ENCODE measurements at regions of chrX and their contacts with region 1.

Region 1: DNA sequence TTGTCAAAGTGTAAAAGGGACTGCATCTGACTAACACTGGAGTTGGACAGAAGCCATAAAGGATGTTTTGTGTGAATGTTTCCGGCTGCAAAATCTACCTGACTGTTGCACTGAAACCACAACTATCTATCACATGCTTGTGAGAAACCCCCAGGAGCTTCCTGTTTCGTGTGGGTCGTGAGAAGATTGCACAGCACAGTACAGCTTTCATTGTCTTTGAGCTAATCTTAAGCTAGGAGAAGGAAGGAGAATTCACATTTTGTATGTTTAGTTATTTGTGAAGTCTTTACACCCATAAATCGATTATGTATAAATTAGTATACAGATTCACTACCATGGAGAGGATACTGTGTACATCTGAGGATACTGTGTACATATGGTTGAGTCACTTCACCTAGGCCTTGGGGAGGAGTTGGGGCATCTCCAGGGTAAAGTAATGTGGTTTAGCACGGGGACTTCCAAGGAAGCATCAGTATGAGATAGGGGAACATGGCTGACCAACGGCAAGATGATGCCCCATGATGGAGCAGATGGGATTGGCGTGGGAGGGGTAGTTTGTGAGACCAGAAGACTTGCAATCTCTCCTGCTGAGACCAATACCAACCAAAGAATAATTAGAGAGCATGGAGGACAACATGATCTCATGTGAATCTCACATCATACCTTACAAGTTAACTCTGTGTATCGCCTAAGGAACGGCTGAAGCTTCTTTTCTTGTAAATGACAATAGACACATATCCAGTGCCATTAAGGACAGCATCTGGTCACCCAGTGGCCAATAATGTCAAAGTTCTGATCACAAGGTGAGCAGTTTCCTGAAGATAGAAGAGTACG is 43.1 kb upstream of the FAM9C start:
- DNase-seq: peak in 8 of 9 donors; percentile 54 to 94 (median 88)
- ATAC-seq: peak; percentile 77
- H3K4me3 ChIP-seq: peak overlapping the region; percentile 70
- H3K4me3 Mint-ChIP-seq: peak overlapping the region; percentile 72 to 89 (median 82)
- H3K27ac ChIP-seq: peak overlapping the region; percentile 88
- H3K27ac Mint-ChIP-seq: peak overlapping the region; percentile 94 to 99 (median 98)
- H3K4me1 ChIP-seq: peaks cover 79 to 81% of the 10 kb centered on the region in 2 donors
- H3K4me1 Mint-ChIP-seq: peaks cover 15 to 99% (median 86%) of the 10 kb centered on the region in 7 donors
- H3K27me3 ChIP-seq: no peaks in the 10 kb centered on the region
- H3K27me3 Mint-ChIP-seq: no peaks in the 10 kb centered on the region

Region 2: GRCh38 chrX:11758400-11759171 is 1329.0 kb before region 1 on chrX:
- CTCF ChIA-PET with region 1: no interaction called
- POLR2A ChIA-PET with region 1: no interaction called
- intact Hi-C with region 1: loop called in 1 of 2 experiments (anchors 5 kb)
- DNase-seq: peak; percentile 86 to 91 (median 89)
- ATAC-seq: peak; percentile 86
- H3K4me3 ChIP-seq: peak overlapping the region; percentile 95
- H3K4me3 Mint-ChIP-seq: peak overlapping the region; percentile 88 to 100 (median 97)
- H3K27ac ChIP-seq: peak overlapping the region; percentile 93
- H3K27ac Mint-ChIP-seq: peak overlapping the region; percentile 95 to 100 (median 99)
- H3K4me1 ChIP-seq: peaks cover 6 to 11% of the 10 kb centered on the region in 2 donors
- H3K4me1 Mint-ChIP-seq: peaks cover 1 to 48% (median 30%) of the 10 kb centered on the region in 7 donors
- H3K27me3 ChIP-seq: no peaks in the 10 kb centered on the region
- H3K27me3 Mint-ChIP-seq: peaks cover 0 to 24% (median 0%) of the 10 kb centered on the region in 5 donors

Region 3: GRCh38 chrX:11967986-11968859 is 1119.3 kb before region 1 on chrX:
- CTCF ChIA-PET with region 1: no interaction called
- POLR2A ChIA-PET with region 1: no interaction called
- intact Hi-C with region 1: no loop called
- DNase-seq: no peak
- ATAC-seq: no peak
- H3K4me3 ChIP-seq: no peak overlapping the region
- H3K4me3 Mint-ChIP-seq: no peak overlapping the region
- H3K27ac ChIP-seq: no peak overlapping the region
- H3K27ac Mint-ChIP-seq: no peak overlapping the region
- H3K4me1 ChIP-seq: no peaks in the 10 kb centered on the region
- H3K4me1 Mint-ChIP-seq: no peaks in the 10 kb centered on the region
- H3K27me3 ChIP-seq: no peaks in the 10 kb centered on the region
- H3K27me3 Mint-ChIP-seq: peaks cover 0 to 4% (median 0%) of the 10 kb centered on the region in 5 donors

Region 4: DNA sequence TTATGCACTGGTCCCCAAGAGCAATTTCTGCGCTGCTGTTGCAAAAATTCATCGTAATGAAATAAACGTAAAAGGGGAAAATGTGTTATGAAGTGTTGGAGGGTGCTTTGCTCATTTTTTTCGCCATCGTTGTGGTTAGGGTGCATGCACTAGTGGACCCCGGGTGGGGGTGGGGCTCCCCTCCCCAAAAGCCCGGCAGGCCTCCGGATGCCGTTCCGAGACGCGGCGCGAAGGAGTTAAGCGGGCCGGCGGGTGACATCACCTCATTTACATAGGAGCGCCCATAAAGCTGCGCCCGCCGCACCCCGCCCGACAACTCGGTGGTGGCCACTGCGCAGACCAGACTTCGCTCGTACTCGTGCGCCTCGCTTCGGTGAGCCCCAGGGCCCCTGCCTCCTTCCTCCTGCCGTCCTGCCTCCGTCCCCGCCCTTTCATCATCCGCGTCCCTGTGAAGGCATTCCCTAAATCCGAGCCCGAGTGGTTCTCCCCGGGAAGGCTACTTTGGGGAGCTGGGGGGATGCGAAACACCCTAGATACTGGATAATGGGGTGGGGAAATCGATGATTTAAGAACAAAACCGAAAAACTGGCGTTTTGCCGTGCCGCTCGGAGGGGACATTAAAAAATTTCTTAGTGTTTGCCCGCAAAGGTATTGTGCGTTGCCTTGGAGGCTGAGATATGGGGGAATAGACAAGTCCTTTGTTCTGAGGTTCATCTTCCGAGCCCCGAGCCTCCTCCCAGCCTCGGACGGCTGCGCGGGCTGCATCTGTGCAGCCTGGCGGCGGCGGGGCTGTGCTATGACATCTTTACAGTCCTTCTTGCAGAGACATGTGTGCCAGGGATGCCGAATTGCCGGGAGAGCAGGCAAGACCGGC is 112.5 kb before region 1 on chrX and contains the start of gene TMSB4X:
- CTCF ChIA-PET with region 1: interaction called, 36 read pairs
- POLR2A ChIA-PET with region 1: interaction called, 1,322 read pairs
- intact Hi-C with region 1: loop called (anchors 1 kb)
- DNase-seq: peak; percentile 69 to 87 (median 81)
- ATAC-seq: peak; percentile 75
- H3K4me3 ChIP-seq: peak within 1 kb of the TSS; percentile 97
- H3K4me3 Mint-ChIP-seq: peak within 1 kb of the TSS; percentile 92 to 99 (median 96)
- H3K27ac ChIP-seq: peak within 1 kb of the TSS; percentile 93
- H3K27ac Mint-ChIP-seq: peak within 1 kb of the TSS; percentile 92 to 99 (median 97)
- H3K4me1 ChIP-seq: peaks cover 5 to 19% of the 10 kb centered on the region in 2 donors
- H3K4me1 Mint-ChIP-seq: peaks cover 6 to 57% (median 24%) of the 10 kb centered on the region in 7 donors
- H3K27me3 ChIP-seq: no peaks in the 10 kb centered on the region
- H3K27me3 Mint-ChIP-seq: peaks cover 0 to 8% (median 0%) of the 10 kb centered on the region in 5 donors
- total RNA-seq, gene TMSB4X: 3,911 to 13,454 (median 4,935) TPM

Region 5: GRCh38 chrX:13029341-13029740 is 58.2 kb before region 1 on chrX:
- CTCF ChIA-PET with region 1: interaction called, 10 read pairs
- POLR2A ChIA-PET with region 1: interaction called, 269 read pairs
- intact Hi-C with region 1: loop called in 1 of 2 experiments (anchors 1 kb)
- DNase-seq: peak in 2 of 9 donors; percentile 13 to 23
- ATAC-seq: peak; percentile 44
- H3K4me3 ChIP-seq: no peak overlapping the region
- H3K4me3 Mint-ChIP-seq: peak overlapping the region; percentile 20 to 78 (median 62)
- H3K27ac ChIP-seq: peak overlapping the region; percentile 71
- H3K27ac Mint-ChIP-seq: peak overlapping the region; percentile 81 to 98 (median 93)
- H3K4me1 ChIP-seq: peaks cover 51 to 52% of the 10 kb centered on the region in 2 donors
- H3K4me1 Mint-ChIP-seq: peaks cover 33 to 88% (median 72%) of the 10 kb centered on the region in 7 donors
- H3K27me3 ChIP-seq: no peaks in the 10 kb centered on the region
- H3K27me3 Mint-ChIP-seq: no peaks in the 10 kb centered on the region

Region 6: DNA sequence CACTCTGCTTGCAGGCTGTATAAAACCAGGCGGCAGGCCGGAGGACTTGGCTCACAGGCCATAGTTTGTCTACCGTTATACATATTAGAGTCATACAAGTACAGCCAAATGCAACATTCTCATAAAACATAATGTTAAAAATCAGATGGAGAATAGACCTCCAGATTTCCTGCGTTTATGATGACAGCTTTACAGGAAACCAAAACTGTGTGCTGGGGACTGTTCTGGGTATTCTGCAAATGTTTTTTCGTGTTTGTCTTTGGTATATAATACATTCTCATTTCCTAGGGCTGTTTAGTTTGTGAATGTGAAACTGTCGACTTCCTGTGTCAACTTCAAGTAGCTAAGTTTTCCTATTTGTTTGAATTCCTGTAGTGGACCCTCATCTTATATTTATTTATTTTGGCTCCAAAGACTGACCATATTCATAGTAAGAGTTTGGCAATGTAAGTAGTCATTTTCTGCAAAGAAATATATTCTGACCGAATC is 36.4 kb after region 1 on chrX:
- CTCF ChIA-PET with region 1: no interaction called
- POLR2A ChIA-PET with region 1: interaction called, 4 read pairs
- intact Hi-C with region 1: loop called in 1 of 2 experiments (anchors 2 kb)
- DNase-seq: peak in 4 of 9 donors; percentile 14 to 33 (median 24)
- ATAC-seq: peak; percentile 29
- H3K4me3 ChIP-seq: peak overlapping the region; percentile 29
- H3K4me3 Mint-ChIP-seq: peak overlapping the region; percentile 18 to 76 (median 66)
- H3K27ac ChIP-seq: peak overlapping the region; percentile 52
- H3K27ac Mint-ChIP-seq: peak overlapping the region; percentile 84 to 95 (median 91)
- H3K4me1 ChIP-seq: peaks cover 19 to 25% of the 10 kb centered on the region in 2 donors
- H3K4me1 Mint-ChIP-seq: peaks cover 5 to 65% (median 48%) of the 10 kb centered on the region in 7 donors
- H3K27me3 ChIP-seq: no peaks in the 10 kb centered on the region
- H3K27me3 Mint-ChIP-seq: no peaks in the 10 kb centered on the region

Region 7: GRCh38 chrX:13177921-13178566 is 90.5 kb after region 1 on chrX:
- CTCF ChIA-PET with region 1: no interaction called
- POLR2A ChIA-PET with region 1: no interaction called
- intact Hi-C with region 1: no loop called
- DNase-seq: peak in 4 of 9 donors; percentile 10 to 44 (median 33)
- ATAC-seq: peak; percentile 36
- H3K4me3 ChIP-seq: no peak overlapping the region
- H3K4me3 Mint-ChIP-seq: peak overlapping the region in 1 of 10 donors; percentile 19
- H3K27ac ChIP-seq: no peak overlapping the region
- H3K27ac Mint-ChIP-seq: peak overlapping the region in 3 of 9 donors; percentile 35 to 63 (median 44)
- H3K4me1 ChIP-seq: peaks cover 0 to 10% of the 10 kb centered on the region in 2 donors
- H3K4me1 Mint-ChIP-seq: peaks cover 0 to 11% (median 10%) of the 10 kb centered on the region in 7 donors
- H3K27me3 ChIP-seq: no peaks in the 10 kb centered on the region
- H3K27me3 Mint-ChIP-seq: no peaks in the 10 kb centered on the region

Region 8: GRCh38 chrX:13360146-13360545 is 272.6 kb after region 1 on chrX:
- CTCF ChIA-PET with region 1: interaction called, 4 read pairs
- POLR2A ChIA-PET with region 1: no interaction called
- intact Hi-C with region 1: loop called in 1 of 2 experiments (anchors 5 kb)
- DNase-seq: peak in 4 of 9 donors; percentile 0 to 13 (median 4)
- ATAC-seq: no peak
- H3K4me3 ChIP-seq: no peak overlapping the region
- H3K4me3 Mint-ChIP-seq: no peak overlapping the region
- H3K27ac ChIP-seq: no peak overlapping the region
- H3K27ac Mint-ChIP-seq: no peak overlapping the region
- H3K4me1 ChIP-seq: no peaks in the 10 kb centered on the region
- H3K4me1 Mint-ChIP-seq: no peaks in the 10 kb centered on the region
- H3K27me3 ChIP-seq: no peaks in the 10 kb centered on the region
- H3K27me3 Mint-ChIP-seq: no peaks in the 10 kb centered on the region

Region 9: GRCh38 chrX:13653022-13653693 is 565.6 kb after region 1 on chrX and contains the start of gene TCEANC:
- CTCF ChIA-PET with region 1: no interaction called
- POLR2A ChIA-PET with region 1: no interaction called
- intact Hi-C with region 1: loop called (anchors 5 kb)
- DNase-seq: peak; percentile 77 to 96 (median 93)
- ATAC-seq: peak; percentile 97
- H3K4me3 ChIP-seq: peak within 1 kb of the TSS; percentile 93
- H3K4me3 Mint-ChIP-seq: peak within 1 kb of the TSS; percentile 79 to 96 (median 93)
- H3K27ac ChIP-seq: peak within 1 kb of the TSS; percentile 93
- H3K27ac Mint-ChIP-seq: peak within 1 kb of the TSS; percentile 91 to 98 (median 96)
- H3K4me1 ChIP-seq: peaks cover 15 to 16% of the 10 kb centered on the region in 2 donors
- H3K4me1 Mint-ChIP-seq: peaks cover 0 to 39% (median 24%) of the 10 kb centered on the region in 7 donors
- H3K27me3 ChIP-seq: no peaks in the 10 kb centered on the region
- H3K27me3 Mint-ChIP-seq: no peaks in the 10 kb centered on the region
- total RNA-seq, gene TCEANC: 5.0 to 17.5 (median 11.4) TPM

Measured in naive thymus-derived CD4-positive, alpha-beta T cell (primary cell).